ENCODE measurements at regions of chr4 and their contacts with region 1.

Region 1: GRCh38 chr4:40963897-40964478 is 214.2 kb downstream of the NSUN7 start:
- DNase-seq: no peak
- ATAC-seq: no peak
- H3K4me3 ChIP-seq: no peak overlapping the region
- H3K27ac ChIP-seq: peak overlapping the region; percentile 45 to 53
- H3K4me1 ChIP-seq: peaks cover 9 to 19% of the 10 kb centered on the region in 2 donors
- H3K27me3 ChIP-seq: no peaks in the 10 kb centered on the region

Region 2: GRCh38 chr4:40938337-40938736 is 25.7 kb before region 1 on chr4:
- intact Hi-C with region 1: loop called in 1 of 2 experiments (anchors 1 kb)
- DNase-seq: no peak
- ATAC-seq: no peak
- H3K4me3 ChIP-seq: no peak overlapping the region
- H3K27ac ChIP-seq: no peak overlapping the region
- H3K4me1 ChIP-seq: peaks cover 0 to 9% of the 10 kb centered on the region in 2 donors
- H3K27me3 ChIP-seq: no peaks in the 10 kb centered on the region